MCF 10A (cell line): ENCODE measurements at regions of chr1 and their contacts with region 1.

Region 1: DNA sequence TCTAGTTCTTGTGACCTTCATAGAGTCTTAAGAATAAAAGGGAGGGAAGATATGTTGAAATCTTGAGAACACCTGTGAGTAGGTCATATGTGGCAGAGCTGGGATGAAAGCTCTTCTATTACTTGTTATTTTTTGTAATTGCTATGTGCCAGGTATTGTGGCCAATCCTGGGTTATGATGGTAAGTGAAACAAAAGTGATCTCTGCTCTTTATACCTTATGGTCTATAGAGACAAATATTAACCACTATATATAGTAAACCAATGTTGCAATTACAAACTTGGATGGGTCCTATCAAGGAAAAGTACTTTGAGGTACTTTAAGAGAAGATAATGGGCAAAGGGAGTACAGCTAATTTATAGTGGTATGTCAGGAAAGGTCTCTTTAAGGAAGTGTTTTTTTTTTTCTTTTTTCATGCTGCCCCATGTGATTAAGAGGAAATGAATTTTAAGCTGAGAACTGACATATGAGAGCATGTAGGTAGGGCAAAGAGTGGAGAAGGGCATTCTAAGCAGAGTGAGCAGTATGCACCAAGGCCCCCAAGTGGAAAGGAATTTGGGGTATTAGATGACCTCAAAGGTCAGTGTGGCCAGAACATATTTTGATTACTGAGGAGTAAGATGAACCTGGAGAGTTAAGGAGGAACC is 43.3 kb downstream of the POU2F1 start:
- DNase-seq: no peak
- H3K4me3 Mint-ChIP-seq: no peak overlapping the region
- H3K27ac Mint-ChIP-seq: no peak overlapping the region
- H3K4me1 Mint-ChIP-seq: peaks cover 4% of the 10 kb centered on the region
- H3K27me3 Mint-ChIP-seq: no peaks in the 10 kb centered on the region
- CTCF ChIP-seq: no peak

Region 2: GRCh38 chr1:167229719-167230385 is 34.1 kb before region 1 on chr1:
- CTCF ChIA-PET with region 1: interaction called, 23 read pairs
- POLR2A ChIA-PET with region 1: interaction called, 9 read pairs
- intact Hi-C with region 1: no loop called
- DNase-seq: no peak
- H3K4me3 Mint-ChIP-seq: no peak overlapping the region
- H3K27ac Mint-ChIP-seq: no peak overlapping the region
- H3K4me1 Mint-ChIP-seq: peaks cover 20% of the 10 kb centered on the region
- H3K27me3 Mint-ChIP-seq: no peaks in the 10 kb centered on the region
- CTCF ChIP-seq: no peak

Region 3: GRCh38 chr1:167278497-167278896 is 14.6 kb after region 1 on chr1:
- CTCF ChIA-PET with region 1: interaction called, 32 read pairs
- POLR2A ChIA-PET with region 1: no interaction called
- intact Hi-C with region 1: no loop called
- DNase-seq: no peak
- H3K4me3 Mint-ChIP-seq: no peak overlapping the region
- H3K27ac Mint-ChIP-seq: no peak overlapping the region
- H3K4me1 Mint-ChIP-seq: peaks cover 17% of the 10 kb centered on the region
- H3K27me3 Mint-ChIP-seq: no peaks in the 10 kb centered on the region
- CTCF ChIP-seq: no peak

Region 4: GRCh38 chr1:167342846-167343245 is 78.9 kb after region 1 on chr1:
- CTCF ChIA-PET with region 1: interaction called, 127 read pairs
- POLR2A ChIA-PET with region 1: interaction called, 14 read pairs
- intact Hi-C with region 1: loop called (anchors 1 kb)
- DNase-seq: peak; percentile 53
- H3K4me3 Mint-ChIP-seq: no peak overlapping the region
- H3K27ac Mint-ChIP-seq: no peak overlapping the region
- H3K4me1 Mint-ChIP-seq: peaks cover 18% of the 10 kb centered on the region
- H3K27me3 Mint-ChIP-seq: no peaks in the 10 kb centered on the region
- CTCF ChIP-seq: peak; percentile 45

Region 5: DNA sequence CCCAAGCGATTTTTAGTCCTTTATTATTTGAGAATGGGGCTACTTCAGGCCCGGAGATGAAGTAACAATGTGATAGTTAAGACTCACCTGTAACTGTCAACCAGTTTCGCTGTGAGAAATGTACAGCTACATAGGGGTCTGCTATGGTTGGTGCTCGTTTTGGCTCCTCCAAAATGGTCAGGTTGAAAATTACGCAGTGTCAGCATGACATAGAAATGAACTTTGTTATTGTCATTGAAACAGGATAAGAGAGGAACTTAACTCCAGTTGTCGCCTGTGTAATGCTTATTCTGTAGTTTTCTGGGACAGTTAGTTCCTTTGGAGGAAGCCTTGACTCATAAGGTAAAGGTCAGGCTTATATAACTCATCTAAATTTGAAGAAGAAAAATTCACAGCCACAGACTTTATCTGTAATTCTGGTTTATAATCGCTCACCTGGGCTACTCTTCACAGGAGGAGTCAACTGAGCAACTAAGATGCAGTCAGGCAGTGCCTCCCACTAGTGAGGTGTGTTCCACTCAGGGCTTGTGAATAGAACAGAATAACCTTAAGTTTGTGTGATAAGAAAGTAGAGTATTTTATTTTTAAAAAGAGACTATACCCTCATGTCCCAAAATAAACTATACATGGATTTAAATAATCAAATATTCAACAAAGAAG is 123.4 kb after region 1 on chr1:
- CTCF ChIA-PET with region 1: interaction called, 12 read pairs
- POLR2A ChIA-PET with region 1: no interaction called
- intact Hi-C with region 1: no loop called
- DNase-seq: no peak
- H3K4me3 Mint-ChIP-seq: no peak overlapping the region
- H3K27ac Mint-ChIP-seq: no peak overlapping the region
- H3K4me1 Mint-ChIP-seq: no peaks in the 10 kb centered on the region
- H3K27me3 Mint-ChIP-seq: no peaks in the 10 kb centered on the region
- CTCF ChIP-seq: no peak

Region 6: DNA sequence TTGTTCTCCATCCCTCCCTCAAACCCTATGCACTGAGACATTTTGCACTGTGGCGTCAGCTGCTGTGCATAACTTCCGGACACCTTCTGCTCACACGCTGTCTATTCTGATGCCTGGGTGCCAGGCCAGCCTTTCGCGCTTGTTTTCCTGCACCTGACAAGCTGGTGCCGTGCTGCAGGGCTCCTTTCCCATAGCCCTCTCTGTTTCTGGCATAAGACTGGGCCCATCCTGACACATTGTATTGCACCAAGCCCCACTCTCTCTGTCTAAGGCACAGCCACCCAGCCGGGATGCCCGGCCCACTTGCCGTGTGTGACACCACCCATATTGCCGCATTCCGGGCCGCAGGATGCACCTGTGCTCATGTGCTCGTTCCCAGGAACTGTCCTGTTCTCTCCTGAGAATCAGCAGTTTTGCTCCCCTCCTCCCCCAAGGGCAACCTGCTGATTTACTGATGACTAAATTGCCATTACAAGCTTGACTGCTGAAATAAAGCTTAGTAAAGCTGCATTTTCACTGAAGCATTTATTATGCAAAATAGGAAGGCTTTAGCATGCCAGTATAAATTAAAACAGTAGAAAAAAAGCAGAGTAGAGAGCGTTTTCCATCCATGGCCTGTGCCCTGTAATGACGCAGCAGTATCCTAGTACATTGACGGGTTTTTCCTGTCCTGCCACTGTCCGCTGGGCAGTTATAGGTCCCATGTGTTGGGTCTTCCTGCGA is 166.4 kb after region 1 on chr1:
- CTCF ChIA-PET with region 1: interaction called, 11 read pairs
- POLR2A ChIA-PET with region 1: no interaction called
- intact Hi-C with region 1: no loop called
- DNase-seq: no peak
- H3K4me3 Mint-ChIP-seq: no peak overlapping the region
- H3K27ac Mint-ChIP-seq: no peak overlapping the region
- H3K4me1 Mint-ChIP-seq: no peaks in the 10 kb centered on the region
- H3K27me3 Mint-ChIP-seq: no peaks in the 10 kb centered on the region
- CTCF ChIP-seq: no peak

Region 7: GRCh38 chr1:167447521-167448136 is 183.7 kb after region 1 on chr1:
- CTCF ChIA-PET with region 1: interaction called, 232 read pairs
- POLR2A ChIA-PET with region 1: interaction called, 6 read pairs
- intact Hi-C with region 1: loop called (anchors 1 kb)
- DNase-seq: peak; percentile 60
- H3K4me3 Mint-ChIP-seq: no peak overlapping the region
- H3K27ac Mint-ChIP-seq: peak overlapping the region; percentile 31
- H3K4me1 Mint-ChIP-seq: no peaks in the 10 kb centered on the region
- H3K27me3 Mint-ChIP-seq: no peaks in the 10 kb centered on the region
- CTCF ChIP-seq: no peak